Lower leg skin (tissue), 4 donors: ENCODE measurements at regions of chr2 and their contacts with region 1.

Region 1: GRCh38 chr2:111897924-111898702 is at the start of gene MERTK:
- DNase-seq: peak; percentile 76 to 97
- H3K4me3 ChIP-seq: peak within 1 kb of the TSS; percentile 75
- CTCF ChIP-seq: peak in 1 of 3 donors; percentile 70
- POLR2A ChIP-seq: no peak
- total RNA-seq, gene MERTK: 3.4 to 9.7 (median 4.9) TPM

Region 2: DNA sequence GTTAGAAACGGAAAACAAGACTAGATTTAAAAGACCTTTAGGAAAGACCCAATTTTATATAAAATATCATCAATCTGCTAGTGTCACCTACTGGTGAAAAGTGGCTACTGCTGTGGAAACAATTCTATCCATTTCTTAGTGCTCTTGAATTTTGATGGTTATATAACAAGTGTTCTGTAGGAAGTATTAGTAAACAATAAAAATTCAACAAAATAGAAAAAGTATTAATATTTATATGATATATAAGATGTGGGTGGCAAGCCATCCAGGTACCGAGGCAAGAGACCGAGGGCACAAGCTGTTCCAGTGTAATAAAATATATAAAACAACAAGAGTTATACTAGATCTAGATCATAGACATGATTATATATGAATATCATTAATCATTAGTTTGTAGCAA is 150.8 kb after region 1 on chr2:
- intact Hi-C with region 1: loop called (anchors 5 kb)
- DNase-seq: peak in 1 of 2 donors; percentile 52
- H3K4me3 ChIP-seq: no peak overlapping the region
- CTCF ChIP-seq: peak in 1 of 3 donors; percentile 83
- POLR2A ChIP-seq: no peak